Activated CD4-positive, alpha-beta T cell treated with anti-CD3 and anti-CD28 coated beads, Interleukin-2, amount 10 ng/mL, durations not matched to agents 24 days and 14 days (primary cell): ENCODE measurements at regions of chr1 and their contacts with region 1.

Region 1: DNA sequence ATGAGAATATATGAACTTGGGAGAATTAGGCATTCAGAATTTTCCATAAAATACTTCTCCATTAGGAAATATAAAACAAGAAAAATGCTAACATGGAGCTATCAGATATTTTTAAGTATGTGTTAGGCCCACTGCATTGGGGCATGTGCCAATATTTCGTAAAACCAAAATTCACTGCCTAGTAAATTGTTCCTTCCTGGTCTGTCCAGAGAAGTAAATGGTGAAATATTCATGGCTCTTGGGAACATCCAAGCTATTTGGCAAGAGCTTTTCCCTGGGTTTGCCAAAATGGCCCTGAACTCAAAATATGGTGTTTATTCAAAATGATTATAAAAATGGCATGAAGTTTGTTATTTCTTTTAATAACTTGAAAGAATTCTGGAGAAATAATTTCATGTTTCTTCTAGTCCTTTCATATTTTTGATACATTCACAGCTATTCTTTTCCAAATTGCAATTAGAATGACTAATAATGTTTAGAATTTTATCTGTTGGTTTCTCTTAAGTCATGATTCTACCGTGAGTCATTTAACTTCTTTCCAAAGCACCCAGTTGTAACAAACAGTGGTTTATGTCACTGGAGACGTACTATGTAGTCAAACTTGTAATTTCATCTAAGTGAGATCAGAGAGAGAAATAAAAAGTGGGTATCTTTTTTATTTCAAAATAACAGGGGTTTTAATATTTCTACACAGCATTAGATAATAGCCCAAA is 25.7 kb upstream of the SLC19A2 start:
- DNase-seq: no peak
- H3K4me3 Mint-ChIP-seq: no peak overlapping the region
- H3K27ac Mint-ChIP-seq: no peak overlapping the region
- H3K4me1 Mint-ChIP-seq: peaks cover 13% of the 10 kb centered on the region
- H3K27me3 Mint-ChIP-seq: no peaks in the 10 kb centered on the region

Region 2: GRCh38 chr1:169491845-169492281 is 19.6 kb before region 1 on chr1:
- intact Hi-C with region 1: loop called (anchors 2 kb)
- DNase-seq: peak; percentile 57
- H3K4me3 Mint-ChIP-seq: no peak overlapping the region
- H3K27ac Mint-ChIP-seq: peak overlapping the region; percentile 39
- H3K4me1 Mint-ChIP-seq: peaks cover 27% of the 10 kb centered on the region
- H3K27me3 Mint-ChIP-seq: no peaks in the 10 kb centered on the region

Region 3: DNA sequence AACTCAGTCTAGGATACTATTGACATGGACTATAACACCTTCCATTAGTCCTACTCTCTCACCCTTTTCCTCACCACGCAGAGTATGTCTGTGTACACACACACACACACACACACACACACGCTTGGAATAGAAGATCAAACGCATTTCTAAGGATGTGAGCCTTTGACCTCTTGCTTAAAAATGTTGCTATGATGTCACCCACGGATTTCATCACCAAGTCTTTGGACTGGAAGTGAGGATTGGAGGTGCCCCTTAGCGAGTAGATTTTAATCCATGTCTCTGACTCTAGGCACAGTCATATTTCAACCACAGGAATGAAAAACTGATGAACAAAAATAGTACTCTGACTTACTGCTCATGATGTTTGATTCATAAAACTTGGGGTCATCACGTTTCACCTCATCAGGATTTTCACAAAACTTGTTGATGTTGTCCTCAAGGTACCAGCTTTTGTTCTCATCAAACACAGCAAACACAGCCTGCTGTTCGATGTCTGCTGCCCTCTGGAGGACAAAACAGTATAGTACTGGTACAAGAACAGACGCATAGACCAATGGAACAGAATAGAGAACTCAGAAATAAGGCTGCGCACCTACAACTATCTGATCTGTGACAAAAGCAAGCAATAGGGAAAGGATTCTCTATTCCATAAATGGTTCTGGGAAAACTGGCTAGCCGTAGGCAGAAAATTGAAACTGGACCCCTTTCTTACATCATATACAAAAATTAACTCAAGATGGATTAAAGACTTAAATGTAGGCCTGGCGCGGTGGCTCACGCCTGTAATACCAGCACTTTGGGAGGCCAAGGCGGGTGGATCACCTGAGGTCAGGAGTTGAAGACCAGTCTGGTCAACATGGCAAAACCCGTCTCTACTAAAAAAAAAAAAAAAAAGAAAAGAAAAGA is 34.9 kb after region 1 on chr1:
- intact Hi-C with region 1: no loop called
- DNase-seq: peak; percentile 90
- H3K4me3 Mint-ChIP-seq: no peak overlapping the region
- H3K27ac Mint-ChIP-seq: no peak overlapping the region
- H3K4me1 Mint-ChIP-seq: peaks cover 19% of the 10 kb centered on the region
- H3K27me3 Mint-ChIP-seq: no peaks in the 10 kb centered on the region

Region 4: GRCh38 chr1:170309389-170310013 is 798.0 kb after region 1 on chr1:
- intact Hi-C with region 1: no loop called
- DNase-seq: no peak
- H3K4me3 Mint-ChIP-seq: no peak overlapping the region
- H3K27ac Mint-ChIP-seq: no peak overlapping the region
- H3K4me1 Mint-ChIP-seq: no peaks in the 10 kb centered on the region
- H3K27me3 Mint-ChIP-seq: peaks cover 5% of the 10 kb centered on the region

Region 5: GRCh38 chr1:170494369-170494768 is 982.9 kb after region 1 on chr1:
- intact Hi-C with region 1: no loop called
- DNase-seq: no peak
- H3K4me3 Mint-ChIP-seq: no peak overlapping the region
- H3K27ac Mint-ChIP-seq: no peak overlapping the region
- H3K4me1 Mint-ChIP-seq: peaks cover 2% of the 10 kb centered on the region
- H3K27me3 Mint-ChIP-seq: peaks cover 5% of the 10 kb centered on the region